ENCODE measurements at regions of chr2 and their contacts with region 1.

Region 1: GRCh38 chr2:241508240-241509154 is at the start of gene STK25:
- DNase-seq: peak; percentile 96 to 100
- H3K4me3 ChIP-seq: peak within 1 kb of the TSS; percentile 97
- H3K27ac ChIP-seq: peak within 1 kb of the TSS; percentile 52; the same call in 1 of the 2 replicates
- H3K4me1 ChIP-seq: peaks cover 19% of the 10 kb centered on the region
- H3K27me3 ChIP-seq: no peaks in the 10 kb centered on the region
- CTCF ChIP-seq: no peak
- total RNA-seq, gene STK25: 201 and 268 TPM in 2 replicates

Region 2: DNA sequence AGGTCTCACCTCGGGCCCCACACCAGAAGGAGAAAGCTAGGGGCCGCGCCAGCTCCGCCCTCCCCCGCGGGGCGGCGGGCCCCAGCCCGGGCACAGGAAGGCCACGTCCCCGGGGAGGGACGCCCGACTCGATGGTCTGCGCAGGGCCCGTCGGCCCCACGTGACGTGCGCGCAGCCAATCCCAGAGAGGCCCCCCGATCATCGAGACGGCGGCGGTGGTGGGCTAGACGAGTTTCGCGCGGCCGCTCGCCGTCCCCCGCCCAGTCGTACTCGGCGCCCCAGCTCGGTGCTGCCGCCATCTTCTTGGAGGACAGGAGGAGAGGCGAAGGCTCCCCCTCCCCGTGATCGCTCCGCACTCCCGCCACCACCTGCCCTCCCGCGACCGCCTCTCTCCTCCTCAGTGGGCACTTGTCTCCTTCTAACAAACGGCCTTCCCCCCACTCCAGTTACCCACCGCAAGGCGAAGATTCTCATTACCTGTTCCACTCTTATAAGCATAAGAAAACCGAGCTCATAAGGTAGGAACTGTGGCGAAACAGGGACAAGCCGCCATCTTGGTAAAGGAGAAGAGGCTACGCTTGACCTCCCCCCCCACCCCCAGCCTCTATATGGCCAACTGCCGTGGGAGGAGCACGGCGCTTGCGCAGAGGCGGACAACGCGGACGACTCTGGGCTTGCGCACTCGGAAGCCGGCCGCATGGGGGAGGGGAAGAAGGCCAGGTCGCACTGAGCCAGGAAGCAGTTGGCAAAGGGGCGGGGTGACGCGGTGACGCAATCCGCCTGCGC is 193.2 kb before region 1 on chr2 and contains the start of gene HDLBP:
- CTCF ChIA-PET with region 1: interaction called, 7 read pairs
- POLR2A ChIA-PET with region 1: no interaction called
- intact Hi-C with region 1: loop called (anchors 5 kb)
- DNase-seq: peak; percentile 95 to 100
- H3K4me3 ChIP-seq: peak within 1 kb of the TSS; percentile 95
- H3K27ac ChIP-seq: peak within 1 kb of the TSS; percentile 96
- H3K4me1 ChIP-seq: peaks cover 39% of the 10 kb centered on the region
- H3K27me3 ChIP-seq: no peaks in the 10 kb centered on the region
- CTCF ChIP-seq: no peak
- total RNA-seq, gene HDLBP: 715 and 908 TPM in 2 replicates

Region 3: GRCh38 chr2:241546771-241547498 is 38.4 kb after region 1 on chr2:
- CTCF ChIA-PET with region 1: no interaction called
- POLR2A ChIA-PET with region 1: interaction called, 29 read pairs
- intact Hi-C with region 1: loop called (anchors 2 kb)
- DNase-seq: peak in 1 of 2 experiments; percentile 76
- H3K4me3 ChIP-seq: no peak overlapping the region
- H3K27ac ChIP-seq: no peak overlapping the region
- H3K4me1 ChIP-seq: peaks cover 16% of the 10 kb centered on the region
- H3K27me3 ChIP-seq: no peaks in the 10 kb centered on the region; the same call in 1 of the 2 replicates
- CTCF ChIP-seq: no peak

Region 4: DNA sequence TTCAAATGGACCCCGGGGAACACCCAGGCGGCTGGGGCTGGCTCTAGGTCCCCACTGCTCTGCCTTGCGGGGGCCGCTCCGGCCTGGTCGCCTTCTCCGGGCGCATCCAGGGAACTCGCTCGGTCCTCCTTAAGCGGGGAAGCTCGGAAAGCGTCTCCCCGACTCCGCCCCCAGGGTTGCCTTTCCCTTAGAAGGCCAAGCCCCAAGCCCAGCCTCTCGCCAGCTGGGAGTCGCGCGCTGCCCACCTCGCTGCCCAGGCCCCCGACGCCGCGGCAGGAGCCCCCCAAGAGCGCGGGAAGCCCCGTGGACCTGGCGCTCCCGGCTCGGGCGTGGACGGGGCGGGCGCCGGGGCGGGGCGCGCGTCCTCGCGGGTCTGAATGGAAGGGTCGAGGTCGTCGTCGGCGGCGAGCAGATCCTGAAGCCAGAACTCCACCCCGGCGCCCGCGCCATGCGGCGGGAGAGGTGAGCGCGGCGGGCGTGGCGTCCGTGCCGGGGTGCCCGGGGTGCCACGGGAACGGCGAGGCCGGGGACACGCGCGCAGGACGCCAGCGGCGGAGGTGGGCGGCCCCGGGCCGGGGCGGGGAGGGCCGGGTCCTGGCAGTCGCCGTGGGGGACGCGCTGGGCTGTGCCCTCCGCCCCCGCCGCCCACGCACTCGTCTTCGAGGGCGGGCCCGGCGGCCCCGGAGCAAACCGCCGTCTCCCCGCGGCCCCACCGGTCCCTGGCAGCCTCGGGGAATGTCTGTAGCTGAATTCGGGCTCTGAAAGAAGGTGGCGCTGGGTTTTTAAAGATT is 50.2 kb after region 1 on chr2 and contains the start of gene BOK:
- CTCF ChIA-PET with region 1: interaction called, 9 read pairs
- POLR2A ChIA-PET with region 1: interaction called, 6 read pairs
- intact Hi-C with region 1: loop called (anchors 1 kb)
- DNase-seq: peak; percentile 59 to 88
- H3K4me3 ChIP-seq: peak within 1 kb of the TSS; percentile 79
- H3K27ac ChIP-seq: no peak within 1 kb of the TSS
- H3K4me1 ChIP-seq: peaks cover 23% of the 10 kb centered on the region
- H3K27me3 ChIP-seq: no peaks in the 10 kb centered on the region
- CTCF ChIP-seq: no peak
- total RNA-seq, gene BOK: 72.8 and 107 TPM in 2 replicates

Region 5: GRCh38 chr2:241598480-241598879 is 90.0 kb after region 1 on chr2:
- CTCF ChIA-PET with region 1: interaction called, 4 read pairs
- POLR2A ChIA-PET with region 1: no interaction called
- intact Hi-C with region 1: loop called (anchors 5 kb)
- DNase-seq: peak; percentile 48 to 64
- H3K4me3 ChIP-seq: no peak overlapping the region
- H3K27ac ChIP-seq: no peak overlapping the region
- H3K4me1 ChIP-seq: no peaks in the 10 kb centered on the region
- H3K27me3 ChIP-seq: no peaks in the 10 kb centered on the region
- CTCF ChIP-seq: peak; percentile 61; the same call in 1 of the 2 replicates

Region 6: GRCh38 chr2:241609859-241610793 is 101.6 kb after region 1 on chr2:
- CTCF ChIA-PET with region 1: no interaction called
- POLR2A ChIA-PET with region 1: no interaction called
- intact Hi-C with region 1: loop called (anchors 5 kb)
- DNase-seq: peak in 1 of 2 experiments; percentile 98
- H3K4me3 ChIP-seq: no peak overlapping the region
- H3K27ac ChIP-seq: no peak overlapping the region
- H3K4me1 ChIP-seq: no peaks in the 10 kb centered on the region
- H3K27me3 ChIP-seq: no peaks in the 10 kb centered on the region
- CTCF ChIP-seq: no peak

Region 7: DNA sequence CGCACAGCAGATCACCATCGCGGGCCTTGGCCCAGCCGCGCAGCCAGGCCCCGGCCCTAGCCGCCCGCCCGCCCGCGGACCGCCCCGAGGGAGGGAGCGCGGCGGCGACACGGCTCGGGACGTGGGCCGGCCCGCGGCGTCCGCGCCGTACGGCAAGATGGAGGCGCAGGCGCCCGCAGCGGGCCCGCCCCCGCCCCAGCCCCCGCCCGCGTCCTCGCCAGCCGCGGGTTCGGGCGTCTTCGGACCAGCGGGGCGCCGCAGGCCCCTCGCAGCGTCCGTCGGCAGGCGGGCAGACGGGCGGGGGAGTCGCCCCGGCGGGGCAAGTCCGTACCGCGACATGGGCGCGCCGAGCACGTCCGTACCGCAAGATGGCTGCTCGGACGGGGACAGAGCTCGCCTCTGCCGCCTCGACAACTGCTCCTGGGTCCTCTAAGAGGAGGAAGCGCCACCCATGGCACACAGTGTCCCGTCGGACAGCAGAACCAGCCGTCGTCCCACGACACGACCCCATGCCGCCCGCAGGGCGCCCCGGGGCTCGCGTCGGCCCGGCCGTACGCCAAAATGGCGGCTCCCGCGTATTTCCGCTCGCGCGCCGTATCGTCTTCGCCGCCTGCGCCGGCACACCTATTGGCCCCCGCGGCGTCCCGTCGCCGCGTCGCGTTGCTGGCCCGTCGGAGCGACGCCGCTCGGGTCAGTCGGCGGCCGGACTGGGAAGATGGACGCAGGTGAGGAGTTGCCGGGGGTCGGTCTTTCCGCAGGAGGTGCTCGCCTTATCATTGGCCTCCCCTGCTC is 128.7 kb after region 1 on chr2 and contains the starts of genes ATG4B and THAP4:
- CTCF ChIA-PET with region 1: no interaction called
- POLR2A ChIA-PET with region 1: no interaction called
- intact Hi-C with region 1: loop called (anchors 1 kb)
- DNase-seq: peak; percentile 69 to 91
- H3K4me3 ChIP-seq: peak within 1 kb of the TSS; percentile 92
- H3K27ac ChIP-seq: peak within 1 kb of the TSS; percentile 86
- H3K4me1 ChIP-seq: peaks cover 25% of the 10 kb centered on the region
- H3K27me3 ChIP-seq: no peaks in the 10 kb centered on the region
- CTCF ChIP-seq: no peak
- total RNA-seq, gene ATG4B: 162 and 177 TPM in 2 replicates
- total RNA-seq, gene THAP4: 78.2 and 94.8 TPM in 2 replicates